ENCODE measurements at regions of chr9 and their contacts with region 1.

Region 1: DNA sequence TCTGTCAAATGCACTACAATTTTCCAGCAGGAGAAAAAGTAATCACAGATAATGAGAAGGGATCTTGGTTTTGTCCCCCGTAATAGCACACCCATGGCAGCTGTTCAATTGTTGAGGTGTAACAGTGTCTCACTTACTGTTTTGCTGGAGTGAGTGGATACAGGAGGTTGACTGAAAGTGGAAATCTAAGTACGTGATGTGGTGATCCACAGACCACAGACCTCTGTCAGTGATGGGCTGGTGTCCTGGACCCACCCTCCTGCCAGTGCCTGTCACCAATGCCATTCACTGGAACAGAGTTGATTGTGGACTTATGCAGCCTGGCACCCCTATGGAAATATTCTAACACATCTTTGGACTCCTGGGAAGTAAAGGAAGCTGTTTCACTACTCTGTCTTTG is 261.7 kb downstream of the TRPM3 start:
- DNase-seq: no peak
- H3K4me3 ChIP-seq: no peak overlapping the region
- CTCF ChIP-seq: no peak

Region 2: DNA sequence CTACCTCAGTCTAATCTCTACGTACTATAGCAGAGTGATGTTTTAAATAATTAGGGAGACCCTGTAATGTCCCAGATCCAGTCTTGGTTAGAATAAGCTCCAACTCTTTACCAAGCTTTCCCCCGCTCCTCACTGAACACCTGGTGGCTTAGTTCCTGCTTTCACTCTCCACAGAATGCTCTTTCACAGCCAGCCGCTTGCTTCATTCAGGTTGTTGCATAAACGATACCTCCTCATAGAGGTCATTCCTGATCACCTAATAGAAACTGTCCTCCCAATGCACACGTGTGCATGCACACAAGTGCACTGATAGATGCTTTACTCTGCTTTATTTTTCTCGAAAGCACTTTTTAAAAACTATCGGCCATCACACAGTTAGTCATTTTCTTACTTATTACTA is 36.4 kb before region 1 on chr9:
- in situ Hi-C with region 1: loop called (anchors 5 kb)
- DNase-seq: no peak
- H3K4me3 ChIP-seq: no peak overlapping the region
- CTCF ChIP-seq: no peak

Measured in astrocyte of the cerebellum (primary cell).